ENCODE measurements at regions of chr22 and their contacts with region 1.

Region 1: GRCh38 chr22:44080936-44081861 is 57.1 kb downstream of the PARVB start:
- DNase-seq: peak in 1 of 2 experiments; percentile 62
- H3K4me3 ChIP-seq: no peak overlapping the region
- H3K27ac ChIP-seq: no peak overlapping the region
- H3K4me1 ChIP-seq: no peaks in the 10 kb centered on the region
- H3K27me3 ChIP-seq: no peaks in the 10 kb centered on the region
- CTCF ChIP-seq: peak; percentile 90

Region 2: GRCh38 chr22:44329179-44329796 is 248.1 kb after region 1 on chr22:
- CTCF ChIA-PET with region 1: no interaction called
- POLR2A ChIA-PET with region 1: no interaction called
- intact Hi-C with region 1: loop called (anchors 10 kb)
- DNase-seq: peak; percentile 56 to 63
- H3K4me3 ChIP-seq: peak overlapping the region; percentile 3; the same call in 1 of the 2 replicates
- H3K27ac ChIP-seq: no peak overlapping the region
- H3K4me1 ChIP-seq: peaks cover 24% of the 10 kb centered on the region
- H3K27me3 ChIP-seq: peaks cover 9% of the 10 kb centered on the region
- CTCF ChIP-seq: no peak

Region 3: GRCh38 chr22:44567846-44568493 is 486.8 kb after region 1 on chr22:
- CTCF ChIA-PET with region 1: no interaction called
- POLR2A ChIA-PET with region 1: no interaction called
- intact Hi-C with region 1: loop called (anchors 5 kb)
- DNase-seq: no peak
- H3K4me3 ChIP-seq: no peak overlapping the region
- H3K27ac ChIP-seq: no peak overlapping the region
- H3K4me1 ChIP-seq: no peaks in the 10 kb centered on the region
- H3K27me3 ChIP-seq: no peaks in the 10 kb centered on the region
- CTCF ChIP-seq: peak; percentile 87

Measured in PC-9 (cell line).